Ovary (tissue), 10 donors: ENCODE measurements at regions of chr19 and their contacts with region 1.

Region 1: DNA sequence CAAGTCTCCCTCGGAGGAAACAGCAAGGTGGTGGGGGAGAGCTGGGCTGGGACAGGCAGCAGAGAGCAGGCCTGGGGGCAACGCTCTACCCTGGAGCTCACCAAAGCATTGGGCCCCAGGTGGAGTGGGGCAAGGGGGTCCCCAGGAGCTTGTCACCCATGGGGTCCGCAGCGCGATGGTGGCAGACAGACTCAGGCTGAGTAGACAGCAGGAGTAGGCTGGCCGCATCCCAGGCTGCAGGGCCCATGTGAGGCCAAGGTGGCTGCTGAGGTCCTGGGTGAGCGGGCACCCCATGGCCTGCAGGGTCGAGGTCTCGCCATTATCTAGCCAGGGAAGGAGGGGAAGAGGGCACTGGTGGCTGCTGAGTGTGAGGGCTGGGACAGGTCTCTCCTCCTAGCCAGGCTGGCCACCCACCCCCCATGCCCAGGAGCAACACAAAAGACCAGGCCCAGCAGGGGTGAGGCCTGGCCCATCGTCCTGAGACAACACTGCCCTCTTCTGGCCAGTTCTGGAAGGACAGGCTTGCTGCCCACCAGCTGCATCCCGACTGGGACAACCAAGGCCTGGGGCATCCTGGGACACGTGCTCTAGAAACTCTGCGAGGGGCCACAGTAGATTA is 33.1 kb downstream of the CEBPG start:
- DNase-seq: peak; percentile 56 to 80 (median 78)
- H3K4me3 ChIP-seq: no peak overlapping the region
- H3K27ac ChIP-seq: no peak overlapping the region
- H3K4me1 ChIP-seq: no peaks in the 10 kb centered on the region
- H3K27me3 ChIP-seq: no peaks in the 10 kb centered on the region
- CTCF ChIP-seq: peak; percentile 66 to 87 (median 84)
- EP300 ChIP-seq: no peak
- POLR2A ChIP-seq: no peak

Region 2: DNA sequence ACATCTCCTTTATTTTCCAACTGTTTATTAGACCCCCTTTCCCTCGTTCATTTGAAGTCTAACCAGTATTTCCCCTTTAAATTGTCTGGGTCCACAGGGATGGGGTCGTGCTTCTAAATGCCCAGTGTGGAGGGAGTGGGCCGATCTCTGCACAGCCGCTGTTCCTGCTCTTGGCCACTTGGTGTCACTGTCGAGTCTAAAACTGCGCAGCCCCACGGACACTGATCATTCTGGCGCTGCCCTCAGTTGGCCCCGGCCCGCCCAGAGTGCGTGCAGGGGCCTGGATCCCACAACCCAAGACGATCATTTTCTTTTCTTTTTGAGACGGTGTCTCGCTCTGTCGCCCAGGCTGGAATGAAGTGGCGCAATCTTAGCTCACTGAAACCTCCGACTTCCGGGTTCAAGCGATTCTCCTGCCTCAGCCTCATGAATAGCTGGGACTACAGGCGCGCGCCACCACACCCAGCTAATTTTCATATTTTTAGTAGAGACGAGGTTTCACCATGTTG is 262.7 kb before region 1 on chr19:
- intact Hi-C with region 1: loop called in 3 of 4 experiments (anchors 5 to 10 kb)
- DNase-seq: peak; percentile 32 to 73 (median 66)
- H3K4me3 ChIP-seq: no peak overlapping the region
- H3K27ac ChIP-seq: no peak overlapping the region
- H3K4me1 ChIP-seq: no peaks in the 10 kb centered on the region
- H3K27me3 ChIP-seq: no peaks in the 10 kb centered on the region
- CTCF ChIP-seq: peak; percentile 78 to 84 (median 81)
- EP300 ChIP-seq: no peak
- POLR2A ChIP-seq: no peak

Region 3: DNA sequence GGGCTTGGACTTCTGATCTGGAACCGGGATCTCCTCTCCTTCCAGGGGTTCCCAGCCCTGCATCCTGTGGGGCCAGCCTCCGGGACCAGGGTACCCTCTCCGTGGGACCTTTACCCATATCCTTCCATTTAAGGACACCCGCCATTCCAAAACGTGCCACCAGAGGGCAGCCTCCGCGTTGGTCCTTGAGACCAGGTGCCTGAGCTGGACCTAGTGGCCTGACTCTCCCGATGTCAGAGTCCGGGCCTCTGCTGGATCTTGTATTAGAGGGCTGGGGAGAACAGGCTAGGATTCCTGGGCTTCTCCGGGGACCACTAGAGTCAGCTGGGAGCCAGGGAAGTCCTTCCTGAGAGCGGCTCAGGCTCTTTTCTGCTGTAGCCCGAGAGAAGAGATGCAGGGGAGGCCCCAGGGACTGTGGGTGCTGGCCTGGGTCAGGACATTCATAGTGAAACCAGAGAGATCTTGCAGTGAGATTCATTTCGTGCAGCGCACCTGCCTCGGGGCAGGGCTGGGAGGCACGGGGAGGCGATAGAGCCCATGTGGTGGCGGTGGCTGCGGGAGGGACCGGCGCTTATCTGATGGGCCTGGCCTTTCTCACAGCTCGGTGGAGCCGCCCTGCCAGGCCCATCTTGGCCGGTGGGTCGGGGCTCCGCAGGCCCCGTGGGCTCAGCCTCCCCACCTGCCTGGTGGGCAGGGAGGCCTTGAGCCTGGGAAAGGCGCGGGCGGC is 171.2 kb before region 1 on chr19:
- intact Hi-C with region 1: loop called (anchors 1 to 5 kb)
- DNase-seq: peak; percentile 36 to 79 (median 78)
- H3K4me3 ChIP-seq: no peak overlapping the region
- H3K27ac ChIP-seq: no peak overlapping the region
- H3K4me1 ChIP-seq: no peaks in the 10 kb centered on the region
- H3K27me3 ChIP-seq: no peaks in the 10 kb centered on the region
- CTCF ChIP-seq: peak; percentile 48 to 72 (median 69)
- EP300 ChIP-seq: no peak
- POLR2A ChIP-seq: no peak

Region 4: DNA sequence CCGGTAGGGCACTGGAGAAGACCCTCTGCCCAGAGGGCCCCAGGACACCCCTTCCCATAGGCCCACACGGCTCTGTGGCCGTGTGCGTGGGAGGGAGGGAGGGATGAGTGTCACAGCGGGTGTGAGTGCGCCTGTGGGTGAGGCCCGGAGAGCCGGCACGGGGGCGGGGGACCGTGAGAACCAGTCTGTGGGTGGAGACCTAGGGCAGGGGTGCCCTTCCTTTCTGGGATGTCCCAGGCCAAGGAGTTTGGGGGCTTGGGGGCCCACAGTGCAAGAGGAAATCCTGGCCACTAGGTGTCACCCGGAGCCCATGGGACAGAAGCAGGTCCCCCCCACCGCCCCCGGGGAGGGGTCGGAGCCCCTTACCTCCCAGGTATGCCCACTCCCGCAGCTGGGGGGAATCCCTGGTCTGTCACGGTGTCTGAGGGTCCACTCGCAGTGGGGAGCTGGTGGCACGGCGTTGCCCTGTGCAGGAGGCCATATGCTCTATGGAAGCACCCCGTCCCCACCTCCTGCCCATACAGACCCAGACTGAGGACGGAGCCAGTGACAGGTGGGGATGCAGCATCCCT is 165.0 kb before region 1 on chr19:
- intact Hi-C with region 1: loop called (anchors 1 to 5 kb)
- DNase-seq: no peak
- H3K4me3 ChIP-seq: no peak overlapping the region
- H3K27ac ChIP-seq: no peak overlapping the region
- H3K4me1 ChIP-seq: no peaks in the 10 kb centered on the region
- H3K27me3 ChIP-seq: no peaks in the 10 kb centered on the region
- CTCF ChIP-seq: peak; percentile 13 to 46 (median 21)
- EP300 ChIP-seq: no peak
- POLR2A ChIP-seq: no peak

Region 5: DNA sequence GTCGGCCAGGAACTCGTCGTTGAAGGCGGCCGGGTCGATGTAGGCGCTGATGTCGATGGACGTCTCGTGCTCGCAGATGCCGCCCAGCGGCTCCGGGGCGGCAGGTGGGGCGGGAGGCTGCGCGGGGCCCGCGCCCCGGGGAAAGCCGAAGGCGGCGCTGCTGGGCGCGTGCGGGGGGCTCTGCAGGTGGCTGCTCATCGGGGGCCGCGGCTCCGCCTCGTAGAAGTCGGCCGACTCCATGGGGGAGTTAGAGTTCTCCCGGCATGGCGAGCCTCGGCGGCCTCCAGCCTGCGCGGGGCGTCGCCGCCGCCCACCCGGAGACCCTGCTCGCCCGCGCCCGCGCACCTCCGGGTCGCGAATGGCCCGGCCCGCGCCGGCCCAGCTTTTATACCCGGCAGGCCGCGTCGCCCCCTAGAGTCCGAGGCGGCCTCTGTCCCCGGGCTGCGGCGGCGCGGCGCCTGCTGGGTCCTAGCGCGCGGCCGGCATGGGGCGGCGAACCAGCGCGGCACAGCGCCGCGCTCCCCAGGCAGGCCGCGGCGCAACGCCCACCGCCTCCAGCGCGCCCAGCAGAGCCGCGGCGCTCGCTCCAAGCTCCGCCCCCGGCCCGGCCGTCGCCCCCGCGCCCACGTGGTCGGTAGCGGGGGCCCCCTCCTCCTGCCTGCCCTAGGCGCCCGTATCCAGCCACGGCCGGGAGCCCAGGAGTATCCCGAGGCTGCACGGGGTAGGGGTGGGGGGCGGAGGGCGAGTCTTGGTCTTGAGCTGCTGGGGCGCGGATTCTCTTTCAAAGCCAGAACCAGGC is 104.3 kb before region 1 on chr19 and contains the start of gene CEBPA:
- intact Hi-C with region 1: loop called in 1 of 4 experiments (anchors 5 kb)
- DNase-seq: peak; percentile 46 to 82 (median 75)
- H3K4me3 ChIP-seq: peak within 1 kb of the TSS; percentile 56
- H3K27ac ChIP-seq: peak within 1 kb of the TSS in 1 of 2 donors; percentile 63
- H3K4me1 ChIP-seq: peaks cover 10% of the 10 kb centered on the region
- H3K27me3 ChIP-seq: no peaks in the 10 kb centered on the region
- CTCF ChIP-seq: peak in 2 of 3 donors; percentile 50 to 90
- EP300 ChIP-seq: no peak
- POLR2A ChIP-seq: peak; percentile 89
- total RNA-seq, gene CEBPA: 1.5 to 6.1 (median 3.7) TPM